HepG2 (cell line): ENCODE measurements at regions of chr3 and their contacts with region 1.

Region 1: DNA sequence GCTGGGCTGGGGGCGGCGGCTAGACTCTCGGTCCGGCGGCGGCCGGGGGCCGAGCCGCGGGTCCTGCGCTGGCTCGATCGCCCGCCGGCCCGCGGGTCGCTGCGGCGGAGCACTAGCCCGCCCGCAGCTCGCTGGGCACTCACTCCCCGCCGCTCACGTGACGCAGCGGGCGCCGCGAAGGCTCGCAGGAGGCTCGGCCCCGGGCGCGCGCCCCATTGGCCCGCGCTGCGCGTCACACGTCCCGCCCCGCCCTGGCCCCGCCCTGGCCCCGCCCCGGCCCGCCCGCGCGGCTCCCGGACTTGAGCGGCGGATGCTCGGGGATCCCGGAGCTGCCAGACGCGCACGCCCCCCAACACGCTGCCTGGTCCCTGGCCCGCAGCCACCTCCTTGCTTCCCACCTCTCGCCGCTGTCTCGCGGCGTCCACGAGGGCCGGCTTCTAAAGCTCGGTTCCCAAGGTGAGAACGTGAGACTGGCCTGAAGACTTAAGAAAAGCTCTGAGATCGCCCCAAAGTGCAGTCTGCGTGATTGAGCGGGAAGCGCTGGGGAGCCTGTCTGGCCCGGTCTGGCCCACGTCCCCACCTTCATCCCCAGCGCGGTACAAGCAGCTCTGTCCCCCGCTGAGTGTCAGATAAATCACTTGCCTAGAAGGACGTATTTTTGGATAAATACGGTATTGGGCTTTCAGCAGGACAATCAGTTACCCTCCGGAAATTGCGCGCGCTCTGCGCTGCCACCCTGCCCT is at the start of gene KLF15:
- DNase-seq: peak; percentile 65
- ATAC-seq: peak; percentile 41
- H3K4me3 ChIP-seq: peak within 1 kb of the TSS; percentile 61 to 80 (median 71)
- H3K27ac ChIP-seq: peak within 1 kb of the TSS; percentile 75
- H3K4me1 ChIP-seq: peaks cover 43% of the 10 kb centered on the region
- H3K27me3 ChIP-seq: peaks cover 7 to 36% of the 10 kb centered on the region in 2 experiments; a peak in 4 of 5 replicates
- CTCF ChIP-seq: no peak
- EP300 ChIP-seq: no peak
- POLR2A ChIP-seq: peak in 1 of 2 experiments; percentile 52; a peak in 2 of 4 replicates
- RAD21 ChIP-seq: no peak
- total RNA-seq, gene KLF15: 5.4 and 7.8 TPM in 2 replicates

Region 2: GRCh38 chr3:124834723-124835718 is 1522.4 kb before region 1 on chr3:
- CTCF ChIA-PET with region 1: no interaction called
- POLR2A ChIA-PET with region 1: no interaction called
- in situ Hi-C with region 1: no loop called
- intact Hi-C with region 1: no loop called
- DNase-seq: peak; percentile 99
- ATAC-seq: peak; percentile 85
- H3K4me3 ChIP-seq: peak overlapping the region in 1 of 3 experiments; percentile 52; a peak in 2 of 6 replicates
- H3K27ac ChIP-seq: peak overlapping the region; percentile 100
- H3K4me1 ChIP-seq: peaks cover 98% of the 10 kb centered on the region
- H3K27me3 ChIP-seq: no peaks in the 10 kb centered on the region
- CTCF ChIP-seq: peak; percentile 45
- EP300 ChIP-seq: peak; percentile 56 to 90; a peak in 3 of 4 replicates
- POLR2A ChIP-seq: peak in 1 of 2 experiments; percentile 71; a peak in 3 of 4 replicates
- RAD21 ChIP-seq: peak; percentile 54

Region 3: DNA sequence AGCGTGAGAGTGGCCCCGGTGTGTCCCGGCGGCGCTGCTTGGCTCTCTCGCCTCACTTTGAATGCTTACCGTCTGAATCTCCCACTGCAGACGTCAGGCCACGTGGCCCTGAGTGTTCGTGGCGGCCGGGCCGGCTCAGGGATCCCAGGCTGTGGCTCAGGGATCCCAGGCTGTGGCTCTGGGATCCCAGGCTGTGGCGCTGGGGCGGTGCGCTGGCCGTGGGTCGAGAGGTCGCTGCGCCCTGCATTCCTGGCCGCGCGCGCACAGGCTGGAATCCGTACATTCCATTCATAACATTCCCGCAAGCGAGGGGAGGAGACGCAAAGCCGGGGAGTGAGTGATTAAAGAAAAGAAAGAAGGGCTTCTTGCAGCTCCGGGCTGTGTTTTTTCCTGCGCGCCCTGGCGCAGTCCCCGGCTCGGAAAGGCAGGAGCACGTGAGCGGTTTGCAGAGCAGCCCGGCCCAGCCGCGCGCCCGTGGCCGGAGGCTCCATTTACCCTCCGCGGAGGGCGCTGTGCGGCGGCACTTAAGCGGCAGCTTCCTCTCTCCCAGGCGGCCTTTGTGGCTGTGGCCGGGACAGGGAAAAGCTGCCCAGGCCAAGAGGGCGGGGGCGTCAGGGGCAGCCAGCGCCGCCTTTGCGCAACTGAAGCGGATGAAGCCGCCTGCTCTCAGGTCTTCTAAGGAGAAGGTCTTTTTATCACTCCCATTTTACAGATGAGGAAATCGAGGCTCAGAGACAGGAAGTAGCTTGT is 90.1 kb before region 1 on chr3:
- CTCF ChIA-PET with region 1: no interaction called
- POLR2A ChIA-PET with region 1: interaction called, 4 read pairs
- in situ Hi-C with region 1: loop called (anchors 5 kb)
- intact Hi-C with region 1: loop called (anchors 2 kb)
- DNase-seq: peak; percentile 88
- ATAC-seq: peak; percentile 90
- H3K4me3 ChIP-seq: peak overlapping the region; percentile 48 to 67 (median 57); a peak in 5 of 6 replicates
- H3K27ac ChIP-seq: peak overlapping the region; percentile 78
- H3K4me1 ChIP-seq: peaks cover 52% of the 10 kb centered on the region
- H3K27me3 ChIP-seq: peaks cover 0 to 2% of the 10 kb centered on the region in 2 experiments; a peak in 1 of 5 replicates
- CTCF ChIP-seq: peak; percentile 71
- EP300 ChIP-seq: no peak
- POLR2A ChIP-seq: peak in 1 of 2 experiments; percentile 52; a peak in 2 of 4 replicates
- RAD21 ChIP-seq: no peak; the same call in 1 of the 2 replicates

Region 4: GRCh38 chr3:126433496-126434263 is 76.2 kb after region 1 on chr3:
- CTCF ChIA-PET with region 1: no interaction called
- POLR2A ChIA-PET with region 1: no interaction called
- in situ Hi-C with region 1: no loop called
- intact Hi-C with region 1: loop called (anchors 2 kb)
- DNase-seq: no peak
- ATAC-seq: peak; percentile 16
- H3K4me3 ChIP-seq: no peak overlapping the region
- H3K27ac ChIP-seq: no peak overlapping the region
- H3K4me1 ChIP-seq: no peaks in the 10 kb centered on the region
- H3K27me3 ChIP-seq: no peaks in the 10 kb centered on the region
- CTCF ChIP-seq: no peak
- EP300 ChIP-seq: no peak
- POLR2A ChIP-seq: no peak
- RAD21 ChIP-seq: no peak